Left colon (tissue), 2 donors: ENCODE measurements at regions of chr2 and their contacts with region 1.

Region 1: GRCh38 chr2:183124222-183124956 is at the start of gene NUP35:
- DNase-seq: peak; percentile 83 to 86
- ATAC-seq: peak; percentile 98
- total RNA-seq, gene NUP35: 7.7 to 11.0 TPM

Region 2: DNA sequence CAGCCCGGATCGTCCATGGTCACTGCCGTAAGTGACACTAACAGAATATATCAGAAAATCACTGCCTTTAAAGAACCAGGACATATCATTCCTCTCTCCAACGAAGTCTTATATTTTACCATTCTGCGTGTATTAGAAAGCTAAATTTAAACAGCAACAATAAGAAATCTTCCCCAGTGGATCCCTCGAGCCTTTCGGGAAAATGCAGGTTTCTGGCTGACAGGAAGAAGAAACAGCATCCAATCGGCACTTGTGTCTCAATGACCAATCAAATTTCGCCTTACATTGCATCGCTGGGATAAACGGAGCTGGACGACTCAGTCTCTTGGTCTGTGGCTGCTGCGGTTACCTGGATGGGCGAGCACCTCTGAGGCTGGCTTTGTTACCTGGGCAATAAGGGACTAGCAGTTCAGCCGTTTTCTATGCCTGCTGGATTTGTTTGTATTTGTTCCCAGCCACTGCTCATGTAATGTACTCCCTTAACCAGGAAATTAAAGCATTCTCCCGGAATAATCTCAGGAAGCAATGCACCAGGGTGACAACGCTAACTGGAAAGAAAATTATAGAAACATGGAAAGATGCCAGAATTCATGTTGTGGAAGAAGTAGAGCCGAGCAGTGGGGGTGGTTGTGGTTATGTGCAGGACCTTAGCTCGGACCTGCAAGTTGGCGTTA is 45.8 kb before region 1 on chr2 and contains the start of gene DUSP19:
- intact Hi-C with region 1: loop called in 1 of 2 experiments (anchors 5 kb)
- DNase-seq: peak; percentile 87 to 89
- ATAC-seq: peak; percentile 98
- total RNA-seq, gene DUSP19: 1.0 to 2.4 TPM